ENCODE measurements at regions of chr3 and their contacts with region 1.

Region 1: GRCh38 chr3:24582431-24583403 is 88.1 kb upstream of the THRB start:
- DNase-seq: peak in 1 of 2 donors; percentile 13
- ATAC-seq: peak in 2 of 8 donors; percentile 42 to 68
- H3K4me3 ChIP-seq: no peak overlapping the region
- H3K27ac ChIP-seq: no peak overlapping the region
- H3K4me1 ChIP-seq: no peaks in the 10 kb centered on the region
- H3K27me3 ChIP-seq: no peaks in the 10 kb centered on the region
- CTCF ChIP-seq: peak; percentile 8 to 57 (median 37)

Region 2: DNA sequence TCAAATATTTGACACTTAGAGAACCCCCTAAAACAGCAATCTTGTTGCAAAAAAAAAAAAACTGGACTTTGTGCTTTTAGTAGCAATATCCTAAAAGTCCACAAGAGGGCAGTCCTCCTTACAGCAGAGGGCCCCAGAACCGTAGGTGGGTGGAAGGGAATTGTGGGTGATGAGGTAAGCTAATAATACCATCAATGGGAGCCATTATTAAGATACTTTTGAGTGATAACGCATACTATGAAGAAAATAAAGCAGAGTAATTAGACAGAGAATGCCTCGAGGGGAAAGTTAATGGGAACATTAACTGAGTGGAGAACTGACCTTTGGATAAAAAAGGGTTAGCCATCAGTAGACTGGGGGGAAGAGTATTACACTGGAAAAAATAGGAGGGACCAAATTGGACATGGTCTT is 318.0 kb before region 1 on chr3:
- intact Hi-C with region 1: loop called in 3 of 10 experiments (anchors 10 kb)
- DNase-seq: no peak
- ATAC-seq: peak in 4 of 8 donors; percentile 17 to 67 (median 48)
- H3K4me3 ChIP-seq: no peak overlapping the region
- H3K27ac ChIP-seq: no peak overlapping the region
- H3K4me1 ChIP-seq: peaks cover 0 to 16% (median 0%) of the 10 kb centered on the region in 9 donors
- H3K27me3 ChIP-seq: no peaks in the 10 kb centered on the region
- CTCF ChIP-seq: peak; percentile 48 to 80 (median 69)

Region 3: GRCh38 chr3:24365194-24365612 is 217.5 kb before region 1 on chr3:
- intact Hi-C with region 1: loop called in 1 of 10 experiments (anchors 10 kb)
- DNase-seq: peak in 1 of 2 donors; percentile 51
- ATAC-seq: peak; percentile 74 to 95 (median 88)
- H3K4me3 ChIP-seq: no peak overlapping the region
- H3K27ac ChIP-seq: peak overlapping the region in 5 of 10 donors; percentile 17 to 55 (median 46)
- H3K4me1 ChIP-seq: peaks cover 0 to 39% (median 19%) of the 10 kb centered on the region in 9 donors
- H3K27me3 ChIP-seq: no peaks in the 10 kb centered on the region
- CTCF ChIP-seq: peak in 7 of 9 donors; percentile 8 to 52 (median 22)

Region 4: GRCh38 chr3:24500806-24501205 is 81.9 kb before region 1 on chr3:
- intact Hi-C with region 1: loop called in 1 of 10 experiments (anchors 1 kb)
- DNase-seq: no peak
- ATAC-seq: no peak
- H3K4me3 ChIP-seq: no peak overlapping the region
- H3K27ac ChIP-seq: no peak overlapping the region
- H3K4me1 ChIP-seq: peaks cover 0 to 17% (median 5%) of the 10 kb centered on the region in 9 donors
- H3K27me3 ChIP-seq: peaks cover 0 to 12% (median 0%) of the 10 kb centered on the region in 7 donors
- CTCF ChIP-seq: no peak

Region 5: GRCh38 chr3:24521420-24522145 is 61.1 kb before region 1 on chr3:
- intact Hi-C with region 1: loop called in 1 of 10 experiments (anchors 5 kb)
- DNase-seq: peak; percentile 51 to 80
- ATAC-seq: peak; percentile 91 to 98 (median 94)
- H3K4me3 ChIP-seq: peak overlapping the region; percentile 58 to 87 (median 72)
- H3K27ac ChIP-seq: peak overlapping the region; percentile 47 to 94 (median 86)
- H3K4me1 ChIP-seq: peaks cover 0 to 22% (median 6%) of the 10 kb centered on the region in 9 donors
- H3K27me3 ChIP-seq: peaks cover 0 to 42% (median 0%) of the 10 kb centered on the region in 7 donors
- CTCF ChIP-seq: peak in 4 of 9 donors; percentile 16 to 51 (median 49)